HepG2 (cell line): ENCODE measurements at regions of chr22 and their contacts with region 1.

Region 1: GRCh38 chr22:37933711-37934376 is 19.6 kb downstream of the C22orf23 start:
- DNase-seq: peak; percentile 83
- ATAC-seq: peak; percentile 98
- H3K4me3 ChIP-seq: no peak overlapping the region
- H3K27ac ChIP-seq: peak overlapping the region; percentile 21
- H3K4me1 ChIP-seq: peaks cover 13% of the 10 kb centered on the region
- H3K27me3 ChIP-seq: no peaks in the 10 kb centered on the region
- CTCF ChIP-seq: peak; percentile 99
- EP300 ChIP-seq: 0 out of 4 replicates have a peak, but pooled peaks of 1 of the 2 experiments have one; percentile 30
- POLR2A ChIP-seq: no peak
- RAD21 ChIP-seq: peak; percentile 96

Region 2: GRCh38 chr22:37817705-37818408 is 116.0 kb before region 1 on chr22:
- CTCF ChIA-PET with region 1: interaction called, 28 read pairs
- POLR2A ChIA-PET with region 1: no interaction called
- in situ Hi-C with region 1: loop called (anchors 10 kb)
- intact Hi-C with region 1: no loop called
- DNase-seq: peak; percentile 86
- ATAC-seq: peak; percentile 70
- H3K4me3 ChIP-seq: peak overlapping the region; percentile 29 to 63 (median 35); a peak in 4 of 6 replicates
- H3K27ac ChIP-seq: peak overlapping the region; percentile 72
- H3K4me1 ChIP-seq: peaks cover 50% of the 10 kb centered on the region
- H3K27me3 ChIP-seq: no peaks in the 10 kb centered on the region
- CTCF ChIP-seq: peak; percentile 100
- EP300 ChIP-seq: peak in 1 of 2 experiments; percentile 23; a peak in 1 of 4 replicates
- POLR2A ChIP-seq: peak in 1 of 2 experiments; percentile 63; a peak in 1 of 4 replicates
- RAD21 ChIP-seq: peak; percentile 98

Region 3: GRCh38 chr22:37887610-37888378 is 46.0 kb before region 1 on chr22:
- CTCF ChIA-PET with region 1: interaction called, 8 read pairs
- POLR2A ChIA-PET with region 1: no interaction called
- in situ Hi-C with region 1: no loop called
- intact Hi-C with region 1: loop called (anchors 2 kb)
- DNase-seq: no peak
- ATAC-seq: peak; percentile 87
- H3K4me3 ChIP-seq: no peak overlapping the region
- H3K27ac ChIP-seq: no peak overlapping the region
- H3K4me1 ChIP-seq: peaks cover 11% of the 10 kb centered on the region
- H3K27me3 ChIP-seq: no peaks in the 10 kb centered on the region
- CTCF ChIP-seq: peak; percentile 67
- EP300 ChIP-seq: no peak
- POLR2A ChIP-seq: no peak
- RAD21 ChIP-seq: peak; percentile 56

Region 4: GRCh38 chr22:37905534-37906363 is 28.1 kb before region 1 on chr22 and contains the start of gene MICALL1:
- CTCF ChIA-PET with region 1: interaction called, 4 read pairs
- POLR2A ChIA-PET with region 1: interaction called, 4 read pairs
- in situ Hi-C with region 1: no loop called
- intact Hi-C with region 1: loop called (anchors 1 kb)
- DNase-seq: no peak
- ATAC-seq: peak; percentile 90
- H3K4me3 ChIP-seq: peak within 1 kb of the TSS; percentile 75 to 87 (median 77)
- H3K27ac ChIP-seq: peak within 1 kb of the TSS; percentile 26
- H3K4me1 ChIP-seq: peaks cover 28% of the 10 kb centered on the region
- H3K27me3 ChIP-seq: no peaks in the 10 kb centered on the region
- CTCF ChIP-seq: peak; percentile 44; the same call in 1 of the 2 replicates
- EP300 ChIP-seq: no peak
- POLR2A ChIP-seq: no peak
- RAD21 ChIP-seq: peak; percentile 81
- total RNA-seq, gene MICALL1: 10.2 and 10.6 TPM in 2 replicates

Region 5: DNA sequence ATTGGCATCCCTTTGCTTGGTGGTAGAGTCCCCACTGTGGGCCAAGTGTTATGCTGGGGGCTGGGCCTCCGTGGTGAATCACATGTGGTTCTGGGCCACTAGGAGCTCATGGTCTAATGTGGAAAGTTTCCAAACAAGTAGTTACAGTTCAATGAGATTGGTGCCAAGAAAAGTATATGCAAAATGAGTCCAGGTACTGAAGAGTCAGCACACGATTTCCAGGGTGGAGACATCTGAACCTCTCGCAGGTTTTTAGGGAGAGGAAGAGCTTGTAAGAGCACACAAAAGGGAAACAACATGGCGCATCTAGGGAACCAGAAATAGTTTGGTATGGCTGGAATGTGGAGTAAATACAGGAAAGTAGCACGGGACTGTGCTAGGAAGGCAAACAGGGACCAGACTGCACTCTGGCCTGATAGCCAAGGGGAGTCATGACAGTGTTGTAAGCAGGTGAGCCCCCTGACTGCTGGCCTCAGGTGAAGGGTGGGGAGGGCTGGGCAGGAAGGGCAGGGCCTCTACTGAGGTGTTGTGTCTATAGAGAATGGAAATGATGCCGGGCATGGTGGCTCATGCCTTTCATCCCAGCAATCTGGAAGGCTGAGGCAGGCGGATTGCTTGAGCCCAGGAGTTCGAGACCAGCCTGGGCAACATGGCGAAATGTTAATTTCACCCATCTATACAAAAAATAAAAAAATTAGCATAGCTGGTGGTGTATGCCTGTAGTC is 32.3 kb after region 1 on chr22:
- CTCF ChIA-PET with region 1: interaction called, 7 read pairs
- POLR2A ChIA-PET with region 1: no interaction called
- in situ Hi-C with region 1: no loop called
- intact Hi-C with region 1: loop called (anchors 5 kb)
- DNase-seq: peak; percentile 77
- ATAC-seq: peak; percentile 65
- H3K4me3 ChIP-seq: no peak overlapping the region
- H3K27ac ChIP-seq: peak overlapping the region; percentile 70
- H3K4me1 ChIP-seq: peaks cover 63% of the 10 kb centered on the region
- H3K27me3 ChIP-seq: no peaks in the 10 kb centered on the region
- CTCF ChIP-seq: no peak
- EP300 ChIP-seq: peak in 1 of 2 experiments; percentile 35; a peak in 1 of 4 replicates
- POLR2A ChIP-seq: no peak
- RAD21 ChIP-seq: no peak

Region 6: DNA sequence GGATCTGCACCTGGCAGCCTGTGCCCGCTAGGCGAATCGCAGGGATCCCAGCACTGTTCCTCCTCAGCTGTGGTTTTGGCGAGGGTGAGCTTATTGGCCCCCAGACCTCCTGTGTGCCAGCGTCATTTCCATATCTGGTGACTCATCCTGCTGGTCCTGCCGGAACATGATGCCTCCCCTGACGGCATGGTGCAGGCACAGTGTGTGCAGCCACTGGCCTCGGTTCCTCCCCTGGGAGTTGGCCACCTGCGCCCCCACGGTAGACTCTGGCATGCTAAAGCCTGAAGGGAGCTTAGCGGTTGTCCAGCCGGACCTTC is 66.1 kb after region 1 on chr22:
- CTCF ChIA-PET with region 1: no interaction called
- POLR2A ChIA-PET with region 1: no interaction called
- in situ Hi-C with region 1: no loop called
- intact Hi-C with region 1: no loop called
- DNase-seq: no peak
- ATAC-seq: no peak
- H3K4me3 ChIP-seq: no peak overlapping the region
- H3K27ac ChIP-seq: no peak overlapping the region
- H3K4me1 ChIP-seq: peaks cover 55% of the 10 kb centered on the region
- H3K27me3 ChIP-seq: peaks cover 0 to 8% of the 10 kb centered on the region in 2 experiments; a peak in 2 of 5 replicates
- CTCF ChIP-seq: no peak
- EP300 ChIP-seq: no peak
- POLR2A ChIP-seq: no peak
- RAD21 ChIP-seq: no peak